BJ (cell line): ENCODE measurements at regions of chr18 and their contacts with region 1.

Region 1: GRCh38 chr18:46073474-46074331 is 1.6 kb upstream of the PSTPIP2 start:
- DNase-seq: no peak
- H3K4me3 ChIP-seq: no peak overlapping the region
- H3K27me3 ChIP-seq: no peaks in the 10 kb centered on the region
- CTCF ChIP-seq: peak; percentile 54

Region 2: DNA sequence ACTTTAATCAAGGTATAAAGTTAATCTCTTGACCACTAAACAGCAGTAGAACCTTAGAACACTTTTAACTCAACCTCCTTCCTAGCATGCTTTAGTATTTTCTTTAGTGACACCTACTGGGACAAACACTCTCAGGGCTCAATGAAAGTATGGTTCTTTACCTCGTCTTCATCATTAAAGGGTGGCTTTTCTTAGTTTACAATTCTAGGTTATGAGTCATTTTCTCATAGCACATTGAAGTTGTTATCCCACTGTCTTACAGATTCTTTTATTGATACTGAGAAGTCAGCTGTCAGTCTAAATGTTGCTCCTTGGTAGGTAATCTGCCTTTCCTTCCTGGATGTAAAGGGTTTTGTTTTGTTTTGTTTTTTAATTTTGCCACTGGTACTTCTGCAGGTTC is 210.2 kb before region 1 on chr18:
- CTCF ChIA-PET with region 1: no interaction called
- POLR2A ChIA-PET with region 1: no interaction called
- DNase-seq: no peak
- H3K4me3 ChIP-seq: no peak overlapping the region
- H3K27me3 ChIP-seq: no peaks in the 10 kb centered on the region
- CTCF ChIP-seq: no peak

Region 3: DNA sequence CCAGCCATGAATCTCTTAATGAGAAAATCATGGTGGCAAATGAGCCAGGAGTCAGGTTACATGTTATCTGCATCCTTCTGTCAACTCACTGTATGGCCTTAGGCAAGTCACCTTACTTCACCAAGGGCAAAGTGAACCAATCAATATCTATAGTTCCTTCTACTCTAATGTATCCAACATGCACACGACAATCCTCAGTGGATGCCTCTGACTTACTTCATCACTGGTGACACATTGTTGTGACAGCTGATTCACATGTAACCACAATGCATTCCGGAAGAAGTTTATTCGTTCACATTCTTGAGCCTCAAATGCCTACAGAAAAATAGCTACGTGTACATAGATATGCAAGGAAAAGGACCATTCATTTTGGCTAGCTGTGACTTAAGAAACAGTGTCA is 80.3 kb before region 1 on chr18:
- CTCF ChIA-PET with region 1: interaction called, 11 read pairs
- POLR2A ChIA-PET with region 1: no interaction called
- DNase-seq: peak; percentile 53
- H3K4me3 ChIP-seq: no peak overlapping the region
- H3K27me3 ChIP-seq: no peaks in the 10 kb centered on the region
- CTCF ChIP-seq: no peak

Region 4: DNA sequence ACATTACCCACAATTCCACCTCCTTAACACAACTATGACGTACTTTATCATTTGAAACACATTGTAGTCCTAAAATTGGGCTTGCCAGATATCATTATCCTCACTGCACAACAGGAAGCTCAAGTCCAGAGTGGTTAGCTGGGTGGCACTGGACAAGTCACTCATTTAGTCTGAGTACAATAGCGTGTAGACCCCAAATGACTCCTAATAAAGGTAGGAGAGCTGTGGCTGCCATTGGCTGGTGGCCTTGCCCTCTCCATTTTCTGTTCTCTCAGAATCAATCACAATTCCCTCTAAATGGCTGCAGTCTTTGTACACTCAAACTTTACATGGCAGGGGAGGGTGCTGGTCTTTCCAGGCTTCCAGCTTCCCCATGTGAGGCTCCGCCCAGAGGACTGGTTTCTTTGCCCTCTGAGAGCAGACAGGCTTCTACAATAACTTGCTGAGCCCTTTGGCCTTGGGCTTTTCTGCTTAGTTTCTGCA is 13.3 kb before region 1 on chr18:
- CTCF ChIA-PET with region 1: interaction called, 15 read pairs
- POLR2A ChIA-PET with region 1: no interaction called
- DNase-seq: no peak
- H3K4me3 ChIP-seq: no peak overlapping the region
- H3K27me3 ChIP-seq: no peaks in the 10 kb centered on the region
- CTCF ChIP-seq: no peak

Region 5: DNA sequence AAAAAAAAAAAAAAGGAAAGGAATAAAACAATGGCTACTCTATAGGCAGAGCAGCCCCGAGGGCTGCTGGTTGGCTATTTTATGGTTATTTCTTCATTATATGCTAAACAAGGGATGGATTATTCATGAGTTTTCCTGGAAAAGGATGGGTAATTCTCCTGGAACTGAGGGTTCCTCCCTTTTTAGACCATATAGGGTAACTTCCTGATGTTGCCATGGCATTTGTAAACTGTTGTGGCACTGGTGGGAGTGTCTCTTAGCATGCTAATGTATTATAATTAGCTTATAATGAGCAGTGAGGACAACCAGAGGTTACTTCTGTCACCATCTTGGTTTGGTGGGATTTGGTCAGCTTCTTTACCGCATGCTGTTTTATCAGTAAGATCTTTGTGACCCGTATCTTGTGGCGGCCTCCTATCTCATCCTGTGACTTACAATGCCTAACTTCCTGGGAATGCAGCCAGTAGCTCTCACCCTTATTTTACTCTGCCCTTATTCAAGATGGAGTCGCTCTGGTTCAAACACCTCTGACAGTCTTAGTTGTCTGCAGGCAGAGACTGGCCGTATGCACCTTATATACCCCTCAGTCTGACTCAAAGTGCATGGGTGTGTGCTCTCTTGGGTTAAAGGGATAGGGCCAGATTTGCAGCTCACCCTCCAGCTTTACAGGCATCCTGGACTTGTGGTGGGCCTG is 88.1 kb after region 1 on chr18:
- CTCF ChIA-PET with region 1: no interaction called
- POLR2A ChIA-PET with region 1: no interaction called
- DNase-seq: no peak
- H3K4me3 ChIP-seq: no peak overlapping the region
- H3K27me3 ChIP-seq: no peaks in the 10 kb centered on the region
- CTCF ChIP-seq: no peak

Region 6: GRCh38 chr18:46213295-46213694 is 139.6 kb after region 1 on chr18:
- CTCF ChIA-PET with region 1: no interaction called
- POLR2A ChIA-PET with region 1: no interaction called
- DNase-seq: no peak
- H3K4me3 ChIP-seq: no peak overlapping the region
- H3K27me3 ChIP-seq: no peaks in the 10 kb centered on the region
- CTCF ChIP-seq: 0 out of 2 replicates have a peak, but pooled peaks have one; percentile 22